Caco-2 (cell line): ENCODE measurements at regions of chr11 and their contacts with region 1.

Region 1: DNA sequence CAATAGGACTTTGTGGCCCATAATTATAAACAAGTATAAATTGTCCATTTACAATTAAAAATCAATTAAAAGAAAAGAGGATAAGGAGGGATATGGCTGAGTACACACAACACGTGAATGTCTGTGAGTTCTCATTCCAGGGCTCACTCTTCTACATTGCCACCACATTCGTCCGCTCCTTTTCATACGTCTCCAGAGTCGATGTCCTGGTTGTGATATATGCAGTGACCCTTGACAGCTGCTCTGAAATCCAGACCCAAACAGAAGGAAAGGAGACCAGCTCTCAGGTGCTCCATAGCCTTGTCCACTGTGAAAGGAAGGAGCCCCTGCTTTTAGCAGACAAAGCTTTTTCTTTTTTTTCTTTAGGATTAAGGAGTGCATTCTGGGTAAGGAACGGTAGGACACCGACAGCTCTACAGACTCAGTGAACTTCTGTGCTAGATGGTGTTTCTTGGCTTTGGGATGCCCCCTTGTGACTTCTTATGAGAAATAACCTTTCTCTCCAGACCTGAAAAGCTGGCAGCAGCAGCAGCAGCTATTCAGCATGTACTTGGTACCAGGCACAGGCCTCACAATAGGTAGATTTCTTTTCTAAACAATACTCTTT is 19.7 kb upstream of the DNAJB13 start:
- DNase-seq: peak; percentile 78 to 85
- H3K4me3 ChIP-seq: no peak overlapping the region
- H3K4me3 Mint-ChIP-seq: no peak overlapping the region
- H3K27ac Mint-ChIP-seq: no peak overlapping the region
- H3K4me1 ChIP-seq: no peaks in the 10 kb centered on the region
- H3K4me1 Mint-ChIP-seq: peaks cover 8% of the 10 kb centered on the region
- H3K27me3 ChIP-seq: no peaks in the 10 kb centered on the region
- H3K27me3 Mint-ChIP-seq: no peaks in the 10 kb centered on the region
- CTCF ChIP-seq: peak; percentile 81 to 89

Region 2: DNA sequence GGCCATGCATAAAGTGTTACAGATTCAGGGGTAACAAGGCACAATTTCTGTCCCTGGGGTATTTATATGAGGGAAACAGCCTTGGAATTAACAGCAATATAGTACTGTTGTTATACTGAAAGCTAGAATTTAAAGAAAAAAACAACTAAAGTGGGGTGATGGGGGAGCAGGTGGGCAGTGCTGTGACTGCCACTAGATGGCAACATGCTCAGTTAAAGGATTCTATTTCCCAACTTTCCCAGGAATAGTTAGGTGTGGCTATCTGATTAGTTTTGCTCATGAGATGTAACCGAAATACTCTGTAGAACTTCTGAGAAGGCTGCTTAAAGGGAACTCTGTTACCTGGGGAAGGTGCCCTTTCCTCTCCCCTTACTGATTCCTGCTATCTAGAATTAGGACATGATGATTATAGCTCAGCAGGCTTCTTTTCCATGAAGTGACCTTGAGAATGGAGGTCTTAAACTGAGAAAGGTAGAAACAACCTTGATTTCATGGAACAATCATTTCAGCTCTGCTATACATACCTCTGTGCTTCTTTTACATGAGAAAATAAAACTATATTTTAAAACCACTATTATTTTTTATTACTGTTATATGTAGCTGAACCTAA is 452.3 kb before region 1 on chr11:
- CTCF ChIA-PET with region 1: interaction called, 20 read pairs
- POLR2A ChIA-PET with region 1: no interaction called
- intact Hi-C with region 1: loop called (anchors 1 kb)
- DNase-seq: peak in 1 of 2 experiments; percentile 63
- H3K4me3 ChIP-seq: no peak overlapping the region
- H3K4me3 Mint-ChIP-seq: no peak overlapping the region
- H3K27ac Mint-ChIP-seq: no peak overlapping the region
- H3K4me1 ChIP-seq: peaks cover 5% of the 10 kb centered on the region; the same call in 1 of the 2 replicates
- H3K4me1 Mint-ChIP-seq: peaks cover 6% of the 10 kb centered on the region
- H3K27me3 ChIP-seq: no peaks in the 10 kb centered on the region
- H3K27me3 Mint-ChIP-seq: no peaks in the 10 kb centered on the region
- CTCF ChIP-seq: peak; percentile 95 to 98

Region 3: DNA sequence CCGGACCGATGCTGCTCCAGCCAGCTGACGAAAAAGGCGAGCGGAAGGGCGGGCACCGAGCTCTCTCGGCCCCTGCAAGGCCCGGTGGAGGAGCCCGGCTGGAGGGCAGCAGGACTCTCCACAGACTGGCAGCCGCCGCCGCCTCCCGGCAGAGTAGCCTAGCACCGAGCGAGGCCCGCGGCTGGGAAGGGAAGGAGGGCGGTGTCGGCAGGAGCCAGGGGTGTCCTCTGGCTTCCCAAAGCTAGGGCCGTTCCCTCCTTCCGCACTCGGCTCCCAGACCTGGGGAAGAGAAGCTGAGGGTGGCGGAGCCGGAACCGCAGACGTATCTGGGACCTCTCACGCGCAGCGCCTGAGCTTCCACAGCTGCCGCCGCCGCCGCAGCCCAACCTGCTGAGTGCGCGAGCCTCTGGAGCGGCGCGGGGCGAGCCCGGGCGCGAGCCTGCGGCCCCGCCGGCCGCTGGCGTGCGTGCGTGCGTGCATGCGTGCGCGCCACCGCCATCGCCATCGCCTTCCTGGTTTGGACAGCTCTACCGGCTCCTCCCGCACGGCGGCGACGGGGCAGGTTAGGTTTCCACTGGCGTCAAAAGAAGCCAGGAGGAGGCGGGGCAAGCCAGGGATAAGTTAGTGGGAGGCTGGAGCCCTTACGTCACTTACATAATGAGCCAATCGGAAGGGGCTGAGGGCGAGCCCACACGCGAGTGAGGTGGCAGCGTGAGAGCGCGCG is 170.3 kb before region 1 on chr11 and contains the start of gene RAB6A:
- CTCF ChIA-PET with region 1: interaction called, 13 read pairs
- POLR2A ChIA-PET with region 1: interaction called, 4 read pairs
- intact Hi-C with region 1: loop called (anchors 1 kb)
- DNase-seq: peak; percentile 100
- H3K4me3 ChIP-seq: peak within 1 kb of the TSS; percentile 92
- H3K4me3 Mint-ChIP-seq: peak within 1 kb of the TSS; percentile 91
- H3K27ac Mint-ChIP-seq: peak within 1 kb of the TSS; percentile 82
- H3K4me1 ChIP-seq: peaks cover 28% of the 10 kb centered on the region
- H3K4me1 Mint-ChIP-seq: peaks cover 21% of the 10 kb centered on the region
- H3K27me3 ChIP-seq: no peaks in the 10 kb centered on the region
- H3K27me3 Mint-ChIP-seq: no peaks in the 10 kb centered on the region
- CTCF ChIP-seq: peak; percentile 51 to 63
- total RNA-seq, gene RAB6A: 210 and 227 TPM in 2 replicates

Region 4: DNA sequence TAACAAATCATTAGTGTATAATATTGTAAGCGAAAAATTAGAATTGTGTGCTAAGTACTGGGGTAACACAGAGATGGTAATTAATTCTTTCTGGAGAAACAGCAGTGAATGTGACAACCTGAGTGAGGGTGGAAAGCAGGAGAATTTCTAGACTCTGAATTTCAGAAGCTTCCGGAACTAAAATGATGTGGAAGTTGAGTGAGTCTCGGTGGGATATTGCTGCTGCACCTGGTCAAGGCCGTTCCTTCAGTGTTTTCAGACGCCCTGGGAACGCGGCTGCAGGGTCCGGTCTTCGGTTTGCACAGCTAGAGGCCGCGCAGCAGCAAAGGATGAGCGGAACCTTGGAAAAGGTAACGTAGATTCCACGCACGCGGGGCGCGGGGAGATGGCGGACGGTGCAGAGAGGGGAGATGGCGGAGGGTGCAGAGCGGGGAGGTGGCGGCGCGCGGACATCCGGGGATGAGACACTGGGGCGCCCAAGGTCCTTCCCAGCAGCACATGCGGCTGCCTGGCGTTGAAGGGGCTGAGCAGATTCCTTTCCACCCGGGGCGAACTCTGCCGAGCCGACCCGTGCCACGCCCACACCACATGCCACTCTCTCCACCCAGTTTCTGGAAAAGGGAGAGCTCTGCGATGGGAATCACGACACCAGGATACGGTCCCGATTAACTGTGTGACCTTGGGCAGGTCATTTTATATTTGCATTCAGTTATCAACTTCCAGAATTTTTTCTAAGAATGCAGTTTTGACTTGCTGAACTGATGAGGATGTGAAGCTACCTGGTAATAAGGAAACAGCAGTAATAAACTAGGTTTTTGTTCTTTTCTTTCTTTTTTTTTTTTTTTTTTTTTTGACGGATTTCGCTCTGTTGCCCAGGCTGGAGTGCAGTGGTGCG is 143.3 kb before region 1 on chr11 and contains the start of gene MRPL48:
- CTCF ChIA-PET with region 1: interaction called, 10 read pairs
- POLR2A ChIA-PET with region 1: interaction called, 9 read pairs
- intact Hi-C with region 1: loop called (anchors 1 kb)
- DNase-seq: peak; percentile 99
- H3K4me3 ChIP-seq: peak within 1 kb of the TSS; percentile 66
- H3K4me3 Mint-ChIP-seq: peak within 1 kb of the TSS; percentile 86
- H3K27ac Mint-ChIP-seq: peak within 1 kb of the TSS; percentile 95
- H3K4me1 ChIP-seq: peaks cover 27% of the 10 kb centered on the region
- H3K4me1 Mint-ChIP-seq: peaks cover 30% of the 10 kb centered on the region
- H3K27me3 ChIP-seq: no peaks in the 10 kb centered on the region
- H3K27me3 Mint-ChIP-seq: no peaks in the 10 kb centered on the region
- CTCF ChIP-seq: no peak
- total RNA-seq, gene MRPL48: 111 and 113 TPM in 2 replicates

Region 5: GRCh38 chr11:73916435-73916834 is 14.7 kb before region 1 on chr11:
- CTCF ChIA-PET with region 1: interaction called, 3 read pairs
- POLR2A ChIA-PET with region 1: no interaction called
- intact Hi-C with region 1: loop called (anchors 2 kb)
- DNase-seq: no peak
- H3K4me3 ChIP-seq: no peak overlapping the region
- H3K4me3 Mint-ChIP-seq: no peak overlapping the region
- H3K27ac Mint-ChIP-seq: no peak overlapping the region
- H3K4me1 ChIP-seq: no peaks in the 10 kb centered on the region
- H3K4me1 Mint-ChIP-seq: peaks cover 6% of the 10 kb centered on the region
- H3K27me3 ChIP-seq: no peaks in the 10 kb centered on the region
- H3K27me3 Mint-ChIP-seq: no peaks in the 10 kb centered on the region
- CTCF ChIP-seq: no peak